HEK293 (cell line): ENCODE measurements at regions of chr6 and their contacts with region 1.

Region 1: GRCh38 chr6:31483392-31483791 is 14.6 kb upstream of the MICB start:
- H3K4me3 ChIP-seq: no peak overlapping the region
- H3K27ac ChIP-seq: no peak overlapping the region
- H3K4me1 ChIP-seq: no peaks in the 10 kb centered on the region
- CTCF ChIP-seq: no peak

Region 2: GRCh38 chr6:31403283-31403989 is 80.0 kb before region 1 on chr6 and contains the start of gene MICA:
- CTCF ChIA-PET with region 1: interaction called, 11 read pairs
- POLR2A ChIA-PET with region 1: no interaction called
- H3K4me3 ChIP-seq: peak within 1 kb of the TSS; percentile 84
- H3K27ac ChIP-seq: peak within 1 kb of the TSS; percentile 63; the same call in 1 of the 2 replicates
- H3K4me1 ChIP-seq: peaks cover 5% of the 10 kb centered on the region; the same call in 1 of the 2 replicates
- CTCF ChIP-seq: peak; percentile 84